A549 (cell line): ENCODE measurements at regions of chr3 and their contacts with region 1.

Region 1: GRCh38 chr3:123652346-123652984 is 67.6 kb upstream of the HACD2 start:
- DNase-seq: peak; percentile 58 to 86
- ATAC-seq: peak; percentile 94 to 98
- H3K4me3 ChIP-seq: no peak overlapping the region
- H3K27ac ChIP-seq: peak overlapping the region; percentile 69 to 85
- H3K4me1 ChIP-seq: peaks cover 15% of the 10 kb centered on the region
- CTCF ChIP-seq: peak; percentile 94
- EP300 ChIP-seq: no peak
- POLR2A ChIP-seq: no peak
- RAD21 ChIP-seq: peak; percentile 97

Region 2: DNA sequence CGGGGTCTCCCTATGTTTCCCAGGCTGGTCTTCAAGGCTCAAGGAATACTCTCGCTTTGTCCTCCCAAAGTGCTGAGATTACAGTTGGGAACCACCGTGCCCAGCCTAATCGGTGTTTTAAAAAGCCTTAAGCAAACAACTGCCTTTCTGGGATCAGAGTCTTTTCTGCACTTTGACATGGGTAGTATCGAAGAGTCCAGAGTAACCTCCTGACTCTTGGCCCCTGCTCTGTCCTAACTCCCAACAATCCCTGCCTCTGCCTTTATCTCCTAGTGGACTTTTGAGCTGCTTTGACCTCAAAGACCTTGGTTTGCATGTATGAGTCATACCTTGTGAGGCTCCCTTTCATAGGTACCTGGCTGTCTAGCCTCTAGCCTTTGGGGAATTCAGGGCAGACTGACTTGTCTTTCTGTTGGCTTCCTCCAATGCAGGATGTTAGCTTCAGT is 46.7 kb before region 1 on chr3:
- CTCF ChIA-PET with region 1: interaction called, 11 read pairs
- POLR2A ChIA-PET with region 1: no interaction called
- DNase-seq: peak; percentile 58 to 80
- ATAC-seq: peak; percentile 59 to 67
- H3K4me3 ChIP-seq: peak overlapping the region; percentile 10; the same call in 1 of the 3 replicates
- H3K27ac ChIP-seq: peak overlapping the region; percentile 90 to 93
- H3K4me1 ChIP-seq: peaks cover 60% of the 10 kb centered on the region
- CTCF ChIP-seq: no peak
- EP300 ChIP-seq: no peak
- POLR2A ChIP-seq: no peak
- RAD21 ChIP-seq: no peak

Region 3: DNA sequence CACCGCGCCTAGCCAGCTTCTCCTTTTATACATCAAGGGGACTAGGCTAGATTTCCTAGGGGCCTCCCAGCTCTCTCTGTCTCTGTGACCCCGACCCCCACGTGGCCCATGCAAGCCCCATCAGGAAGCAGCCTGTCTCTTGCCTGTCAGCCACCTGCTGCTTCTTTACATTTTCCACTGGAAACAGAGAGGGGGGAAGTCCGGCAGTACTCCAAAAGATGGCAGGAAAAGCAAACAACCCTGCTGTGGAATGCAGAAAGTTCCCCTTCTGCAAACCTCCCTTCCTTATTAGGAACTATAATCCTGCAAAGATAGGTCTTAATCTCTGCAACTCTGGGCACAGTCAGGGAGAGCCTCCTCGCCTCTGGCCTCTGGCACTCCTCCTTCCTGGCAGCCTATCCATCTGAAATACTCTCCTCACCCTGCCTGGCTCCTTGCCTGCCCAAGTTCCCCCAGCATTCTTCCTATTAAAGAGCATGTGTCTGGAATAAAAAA is 20.3 kb before region 1 on chr3:
- CTCF ChIA-PET with region 1: interaction called, 119 read pairs
- POLR2A ChIA-PET with region 1: no interaction called
- DNase-seq: peak in 1 of 2 experiments; percentile 30
- ATAC-seq: peak in 1 of 2 experiments; percentile 68; a peak in 3 of 6 replicates
- H3K4me3 ChIP-seq: no peak overlapping the region
- H3K27ac ChIP-seq: peak overlapping the region in 1 of 2 experiments; percentile 64; a peak in 2 of 6 replicates
- H3K4me1 ChIP-seq: peaks cover 13% of the 10 kb centered on the region
- CTCF ChIP-seq: no peak
- EP300 ChIP-seq: no peak
- POLR2A ChIP-seq: no peak
- RAD21 ChIP-seq: no peak

Region 4: DNA sequence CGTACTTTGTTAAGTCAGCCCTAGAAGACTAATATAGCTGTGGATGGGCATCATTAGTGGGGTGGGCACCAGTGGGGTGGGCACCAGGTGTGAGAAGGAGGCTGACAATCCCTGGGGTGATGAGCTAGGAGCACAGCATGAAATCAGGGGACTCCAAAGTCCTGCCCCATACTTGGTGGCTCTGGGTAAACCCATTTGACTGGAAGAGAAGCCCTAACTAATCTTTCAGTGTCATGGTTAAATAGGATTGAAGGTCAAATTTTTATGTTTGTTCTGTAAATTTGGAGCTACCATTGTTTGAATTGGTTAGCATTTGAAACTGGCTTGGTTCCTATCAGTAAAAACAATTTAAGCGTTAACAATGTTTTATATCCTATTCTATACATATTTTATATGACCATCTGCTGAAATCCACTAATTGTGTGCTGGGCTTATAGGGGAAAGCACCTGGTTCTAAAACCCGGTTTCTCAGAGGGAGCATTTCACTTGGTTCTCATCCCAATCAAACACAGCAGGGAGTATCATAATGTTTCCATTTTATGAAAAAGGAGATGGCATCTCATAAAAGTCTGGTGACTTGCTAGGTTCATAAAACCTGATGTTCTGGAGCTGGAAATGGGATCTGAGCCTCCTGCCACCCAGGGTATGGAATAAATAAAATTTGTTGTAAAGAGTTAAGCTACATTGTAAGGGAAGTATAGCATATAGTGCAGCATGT is 20.1 kb after region 1 on chr3:
- CTCF ChIA-PET with region 1: interaction called, 829 read pairs
- POLR2A ChIA-PET with region 1: no interaction called
- DNase-seq: no peak
- ATAC-seq: no peak
- H3K4me3 ChIP-seq: no peak overlapping the region
- H3K27ac ChIP-seq: no peak overlapping the region
- H3K4me1 ChIP-seq: no peaks in the 10 kb centered on the region
- CTCF ChIP-seq: no peak
- EP300 ChIP-seq: no peak
- POLR2A ChIP-seq: no peak
- RAD21 ChIP-seq: no peak

Region 5: DNA sequence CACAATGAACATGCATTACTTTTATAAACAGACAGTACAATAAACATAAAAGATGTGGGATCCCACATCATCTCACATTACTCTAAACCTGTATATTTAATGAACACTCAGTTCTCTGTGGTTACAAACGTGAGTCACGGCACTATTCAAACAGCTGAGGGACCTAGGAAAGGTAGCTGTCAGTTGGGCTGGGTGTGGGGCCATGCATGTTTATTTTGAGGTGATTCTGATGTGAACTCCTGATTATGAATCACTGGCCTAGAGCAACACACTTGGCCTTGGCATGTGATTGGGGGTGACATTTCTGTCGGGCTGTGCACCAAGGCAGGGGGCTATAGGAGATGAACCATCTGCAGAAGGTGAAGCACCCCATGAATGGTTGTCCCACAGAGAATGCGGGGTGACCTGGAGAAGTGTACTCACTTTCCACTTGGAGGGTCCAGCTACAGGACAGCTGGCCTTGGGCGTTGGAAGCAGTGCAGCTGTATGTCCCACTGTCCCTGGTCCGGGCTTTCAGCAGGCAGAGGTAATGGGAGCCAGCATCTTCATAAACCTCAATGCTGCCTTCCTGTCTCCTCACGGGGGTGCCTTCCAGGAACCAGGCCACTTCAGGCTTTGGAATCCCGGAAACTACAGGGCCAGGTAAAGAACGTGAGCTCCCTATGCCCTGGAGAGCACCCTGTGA is 80.2 kb after region 1 on chr3:
- CTCF ChIA-PET with region 1: interaction called, 38 read pairs
- POLR2A ChIA-PET with region 1: interaction called, 3 read pairs
- DNase-seq: peak; percentile 70 to 80
- ATAC-seq: peak; percentile 83 to 87
- H3K4me3 ChIP-seq: no peak overlapping the region
- H3K27ac ChIP-seq: peak overlapping the region; percentile 71 to 85
- H3K4me1 ChIP-seq: peaks cover 59% of the 10 kb centered on the region
- CTCF ChIP-seq: no peak
- EP300 ChIP-seq: peak; percentile 66 to 72; a peak in 2 of 5 replicates
- POLR2A ChIP-seq: no peak
- RAD21 ChIP-seq: peak; percentile 24; a peak in 1 of 5 replicates

Region 6: GRCh38 chr3:124078953-124079911 is 426.8 kb after region 1 on chr3:
- CTCF ChIA-PET with region 1: interaction called, 22 read pairs
- POLR2A ChIA-PET with region 1: no interaction called
- DNase-seq: peak; percentile 19 to 35
- ATAC-seq: peak in 1 of 2 experiments; percentile 66; a peak in 3 of 6 replicates
- H3K4me3 ChIP-seq: no peak overlapping the region
- H3K27ac ChIP-seq: no peak overlapping the region
- H3K4me1 ChIP-seq: no peaks in the 10 kb centered on the region
- CTCF ChIP-seq: peak; percentile 90
- EP300 ChIP-seq: no peak
- POLR2A ChIP-seq: no peak
- RAD21 ChIP-seq: peak; percentile 78 to 80